Activated T-helper 2 cell treated with anti-CD3 and anti-CD28 coated beads, Interferon-gamma antibody, Interleukin-2, Interleukin-4, amounts not matched to agents 10 μg/mL and 5 μg/mL and 100 μg/mL, durations not matched to agents 14 hours and 24 hours and 36 hours (primary cell): ENCODE measurements at regions of chr15 and their contacts with region 1.

Region 1: GRCh38 chr15:80058851-80059785 is at the start of gene ZFAND6:
- DNase-seq: peak; percentile 95
- H3K4me3 Mint-ChIP-seq: peak within 1 kb of the TSS; percentile 89
- H3K27ac Mint-ChIP-seq: peak within 1 kb of the TSS; percentile 87
- H3K4me1 Mint-ChIP-seq: peaks cover 41% of the 10 kb centered on the region
- H3K27me3 Mint-ChIP-seq: peaks cover 9% of the 10 kb centered on the region
- total RNA-seq, gene ZFAND6: 41.9 and 42.8 TPM in 2 replicates

Region 2: DNA sequence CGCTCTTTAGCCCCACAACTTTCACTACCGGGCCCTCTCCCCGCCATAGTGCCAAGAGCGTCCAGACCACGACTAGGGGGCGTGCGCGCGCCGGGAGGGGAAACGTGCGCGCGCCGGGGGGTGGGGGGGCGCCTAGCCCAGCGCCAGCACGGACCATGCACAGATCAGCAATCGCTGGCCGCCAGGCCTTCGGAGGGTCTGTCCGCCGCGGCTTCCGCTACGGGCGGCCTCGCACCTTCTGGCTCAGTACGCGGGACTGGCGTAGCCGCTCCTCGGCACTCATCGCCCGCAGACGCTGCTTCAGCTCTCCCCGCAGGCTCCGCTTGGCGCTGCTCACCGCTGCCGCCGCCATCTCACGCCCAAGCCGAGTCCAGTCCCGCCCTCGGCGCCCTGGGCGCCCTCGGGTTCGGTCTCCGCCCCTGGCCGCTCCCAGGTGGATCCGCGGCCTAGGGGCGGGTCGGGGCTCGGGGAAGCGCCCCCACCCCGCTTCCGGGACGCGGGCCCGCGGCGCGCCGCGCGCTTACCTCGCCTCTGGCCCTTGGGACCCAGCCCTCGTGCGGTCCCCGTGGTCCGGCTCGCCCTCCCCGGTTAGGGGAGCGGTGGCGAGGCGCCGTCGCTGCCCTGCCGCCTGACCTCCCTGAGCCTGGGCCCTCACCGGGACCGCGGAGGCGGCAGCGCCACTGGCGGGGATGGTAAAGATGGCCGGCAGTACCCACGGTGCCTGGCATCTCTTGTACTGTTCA is 162.3 kb before region 1 on chr15 and contains the start of gene MTHFS:
- intact Hi-C with region 1: loop called (anchors 1 kb)
- DNase-seq: peak; percentile 77
- H3K4me3 Mint-ChIP-seq: peak within 1 kb of the TSS; percentile 98
- H3K27ac Mint-ChIP-seq: peak within 1 kb of the TSS; percentile 99
- H3K4me1 Mint-ChIP-seq: peaks cover 47% of the 10 kb centered on the region
- H3K27me3 Mint-ChIP-seq: no peaks in the 10 kb centered on the region
- total RNA-seq, gene MTHFS: 33.3 and 34.6 TPM in 2 replicates

Region 3: DNA sequence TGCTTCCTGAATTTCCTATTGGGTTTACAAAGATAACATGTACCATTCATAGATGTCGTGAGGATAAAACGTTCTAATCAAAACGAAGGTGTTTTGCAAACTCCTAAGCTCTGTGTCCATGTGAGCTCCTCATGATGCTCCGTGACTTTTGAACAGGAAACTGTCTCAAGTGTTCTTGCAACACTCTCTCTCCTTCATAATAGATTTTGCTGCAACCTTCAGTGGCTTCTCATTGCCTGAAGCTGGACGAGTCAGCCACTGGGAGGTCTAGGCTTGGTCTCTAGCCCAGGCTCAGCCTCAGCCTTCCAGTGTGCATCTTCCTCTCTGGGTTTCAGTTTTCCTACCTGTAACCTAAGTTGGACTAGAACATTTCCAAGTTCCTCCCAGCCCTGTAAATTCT is 69.4 kb before region 1 on chr15:
- intact Hi-C with region 1: no loop called
- DNase-seq: no peak
- H3K4me3 Mint-ChIP-seq: no peak overlapping the region
- H3K27ac Mint-ChIP-seq: no peak overlapping the region
- H3K4me1 Mint-ChIP-seq: peaks cover 5% of the 10 kb centered on the region
- H3K27me3 Mint-ChIP-seq: peaks cover 2% of the 10 kb centered on the region

Region 4: GRCh38 chr15:80010131-80010673 is 48.9 kb before region 1 on chr15:
- intact Hi-C with region 1: loop called (anchors 5 kb)
- DNase-seq: no peak
- H3K4me3 Mint-ChIP-seq: no peak overlapping the region
- H3K27ac Mint-ChIP-seq: no peak overlapping the region
- H3K4me1 Mint-ChIP-seq: no peaks in the 10 kb centered on the region
- H3K27me3 Mint-ChIP-seq: no peaks in the 10 kb centered on the region

Region 5: GRCh38 chr15:80031841-80032240 is 27.3 kb before region 1 on chr15:
- intact Hi-C with region 1: loop called (anchors 2 kb)
- DNase-seq: no peak
- H3K4me3 Mint-ChIP-seq: no peak overlapping the region
- H3K27ac Mint-ChIP-seq: no peak overlapping the region
- H3K4me1 Mint-ChIP-seq: peaks cover 21% of the 10 kb centered on the region
- H3K27me3 Mint-ChIP-seq: no peaks in the 10 kb centered on the region

Region 6: DNA sequence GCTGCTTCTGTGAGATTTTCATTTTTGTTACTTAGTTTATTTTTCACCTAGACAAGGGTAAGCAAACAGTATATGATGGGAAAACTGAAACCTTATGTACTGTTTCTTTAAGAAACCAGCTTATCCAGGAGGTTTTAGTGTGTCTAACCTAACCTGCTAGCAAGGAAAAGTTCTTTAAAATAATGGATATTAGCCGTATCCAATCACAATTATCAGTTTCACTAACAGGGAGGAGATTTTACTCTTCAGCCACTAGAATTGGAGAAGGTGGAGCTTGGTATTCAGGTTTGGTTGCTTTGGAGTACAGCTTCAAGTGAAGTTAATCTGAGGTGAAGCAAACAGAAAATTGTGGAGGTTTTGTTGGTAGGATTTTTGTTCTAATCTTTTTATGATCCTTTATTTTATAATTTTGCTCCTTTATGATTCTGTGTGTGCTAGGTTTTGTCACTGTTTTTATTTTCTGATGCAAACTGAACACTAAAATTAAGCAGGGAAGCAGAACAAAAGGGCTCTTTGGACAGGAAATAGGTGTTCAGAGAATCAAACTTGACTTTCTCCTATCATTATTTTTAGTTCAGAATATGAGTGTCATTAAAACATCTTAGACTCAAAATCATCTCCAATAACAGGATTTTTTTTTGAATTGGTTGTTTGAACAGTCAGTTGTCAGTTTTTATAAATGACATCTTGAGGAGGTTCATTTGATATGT is 13.3 kb after region 1 on chr15:
- intact Hi-C with region 1: loop called (anchors 1 kb)
- DNase-seq: no peak
- H3K4me3 Mint-ChIP-seq: peak overlapping the region; percentile 86
- H3K27ac Mint-ChIP-seq: no peak overlapping the region
- H3K4me1 Mint-ChIP-seq: peaks cover 36% of the 10 kb centered on the region
- H3K27me3 Mint-ChIP-seq: no peaks in the 10 kb centered on the region

Region 7: GRCh38 chr15:80152180-80152845 is 93.2 kb after region 1 on chr15:
- intact Hi-C with region 1: loop called (anchors 2 kb)
- DNase-seq: peak; percentile 80
- H3K4me3 Mint-ChIP-seq: peak overlapping the region; percentile 95
- H3K27ac Mint-ChIP-seq: peak overlapping the region; percentile 64
- H3K4me1 Mint-ChIP-seq: peaks cover 30% of the 10 kb centered on the region
- H3K27me3 Mint-ChIP-seq: peaks cover 5% of the 10 kb centered on the region